Ovary (tissue), 10 donors: ENCODE measurements at regions of chr4 and their contacts with region 1.

Region 1: GRCh38 chr4:122922877-122923511 is 597 bp upstream of the NUDT6 start:
- DNase-seq: peak; percentile 73 to 85 (median 79)
- H3K4me3 ChIP-seq: peak overlapping the region; percentile 92
- H3K27ac ChIP-seq: peak overlapping the region in 1 of 2 donors; percentile 31
- H3K4me1 ChIP-seq: peaks cover 8% of the 10 kb centered on the region
- H3K27me3 ChIP-seq: no peaks in the 10 kb centered on the region
- CTCF ChIP-seq: no peak
- EP300 ChIP-seq: no peak
- POLR2A ChIP-seq: no peak

Region 2: DNA sequence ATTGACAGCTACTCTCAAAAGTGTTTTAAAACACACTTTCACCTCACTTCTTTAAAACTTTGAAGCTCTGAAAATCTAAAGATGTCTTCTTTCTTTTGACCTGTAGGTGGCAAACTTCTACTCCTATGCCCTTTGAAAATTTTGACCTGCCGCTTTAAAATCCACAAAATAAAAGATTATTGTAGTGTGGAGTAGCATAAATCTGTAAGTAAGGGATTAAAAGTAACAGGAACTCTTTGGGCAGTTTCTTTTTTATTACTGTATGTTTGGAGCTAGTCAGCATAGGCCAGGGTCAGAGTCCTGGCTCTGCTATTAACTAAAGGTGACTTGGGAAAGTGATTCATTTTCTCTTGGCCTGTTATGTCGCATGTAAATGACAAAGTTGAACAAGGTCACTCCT is 165.0 kb before region 1 on chr4:
- intact Hi-C with region 1: loop called in 3 of 4 experiments (anchors 5 to 10 kb)
- DNase-seq: no peak
- H3K4me3 ChIP-seq: no peak overlapping the region
- H3K27ac ChIP-seq: no peak overlapping the region
- H3K4me1 ChIP-seq: no peaks in the 10 kb centered on the region
- H3K27me3 ChIP-seq: no peaks in the 10 kb centered on the region
- CTCF ChIP-seq: peak; percentile 22 to 77 (median 50)
- EP300 ChIP-seq: no peak
- POLR2A ChIP-seq: no peak

Region 3: DNA sequence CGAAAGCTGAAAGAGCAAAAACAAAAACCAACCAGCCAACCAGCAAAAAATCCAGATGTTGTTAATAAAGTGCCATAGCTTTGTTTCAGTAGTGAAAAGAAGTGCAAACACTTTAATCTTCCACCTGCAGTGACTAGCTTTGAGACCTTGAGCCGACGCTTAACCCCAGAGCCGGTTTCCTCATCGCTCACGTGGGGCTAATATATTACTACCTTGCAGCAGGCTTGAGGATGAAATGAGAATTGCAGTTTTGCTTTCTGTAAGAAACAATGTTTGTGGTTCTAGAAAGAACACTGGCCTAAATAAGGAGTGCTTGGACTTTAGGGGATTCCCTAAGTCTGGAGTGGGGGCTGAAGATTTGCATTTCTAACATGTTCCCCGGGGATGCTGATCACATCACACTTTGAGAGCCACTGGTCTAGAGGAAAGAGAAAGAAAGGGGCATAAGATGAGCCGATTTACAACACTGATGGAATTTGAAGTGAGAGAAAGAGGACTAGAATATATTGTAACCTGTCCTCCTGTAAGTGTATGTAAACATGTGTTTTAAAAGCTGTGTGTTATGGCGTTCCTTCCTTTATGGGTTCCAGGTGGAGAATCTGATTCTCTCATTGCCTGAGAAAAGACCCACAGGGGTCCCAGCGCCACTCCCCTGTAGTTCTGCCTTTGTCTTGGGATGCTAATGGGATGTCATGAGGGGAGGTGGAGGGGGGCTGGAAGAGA is 95.0 kb before region 1 on chr4:
- intact Hi-C with region 1: loop called in 1 of 4 experiments (anchors 5 kb)
- DNase-seq: peak; percentile 38 to 69 (median 48)
- H3K4me3 ChIP-seq: peak overlapping the region; percentile 77
- H3K27ac ChIP-seq: peak overlapping the region; percentile 96 to 98
- H3K4me1 ChIP-seq: peaks cover 6% of the 10 kb centered on the region
- H3K27me3 ChIP-seq: no peaks in the 10 kb centered on the region
- CTCF ChIP-seq: peak in 2 of 3 donors; percentile 19 to 48
- EP300 ChIP-seq: no peak
- POLR2A ChIP-seq: no peak